ENCODE measurements at regions of chr10 and their contacts with region 1.

Region 1: GRCh38 chr10:79374312-79375191 is 27.3 kb downstream of the PPIF start:
- DNase-seq: peak; percentile 88
- ATAC-seq: peak; percentile 70

Region 2: DNA sequence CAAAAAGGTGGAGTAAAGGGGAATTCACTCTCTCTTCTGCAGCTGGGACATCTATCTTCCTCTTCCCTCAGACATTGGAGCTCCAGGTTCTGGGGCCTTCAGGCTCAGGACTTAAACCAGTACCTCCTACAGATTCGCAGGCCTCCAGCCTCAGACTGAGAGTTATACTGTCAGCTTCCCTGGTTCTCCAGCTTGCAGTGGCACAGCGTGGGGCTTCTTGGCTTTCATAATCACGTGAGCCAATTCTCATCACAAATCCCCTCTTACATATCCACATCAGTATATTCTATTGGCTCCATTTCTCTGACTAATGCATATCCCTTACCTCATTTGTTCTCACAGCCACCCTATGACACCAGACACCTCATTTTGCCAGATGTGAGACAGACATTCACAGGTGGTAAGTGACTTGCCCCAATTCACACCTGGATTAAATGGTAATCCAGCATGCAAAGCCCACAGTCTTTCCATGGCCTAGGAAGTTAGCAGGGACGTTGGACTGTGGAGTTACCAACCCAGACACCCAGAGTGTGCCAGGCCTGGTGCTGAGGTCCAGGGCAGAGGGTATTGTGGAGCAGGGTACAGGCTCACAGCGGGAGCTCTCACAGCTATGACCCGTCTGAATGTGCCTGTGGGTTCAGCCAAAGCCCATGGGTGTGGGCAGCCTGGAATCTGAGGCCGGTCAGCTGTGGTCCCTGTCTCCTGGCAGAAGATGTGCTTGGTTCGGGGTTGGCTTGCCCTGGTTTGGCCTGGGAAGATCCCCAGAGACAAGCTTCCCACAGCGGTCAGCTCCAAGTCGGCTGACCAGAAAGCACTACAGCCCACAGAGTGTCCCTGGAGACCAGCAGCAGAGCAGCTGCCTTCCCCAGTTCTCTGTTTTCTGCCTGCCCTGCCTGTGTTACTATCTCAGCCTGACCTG is 89.3 kb after region 1 on chr10:
- intact Hi-C with region 1: loop called (anchors 2 kb)
- DNase-seq: peak; percentile 55
- ATAC-seq: peak; percentile 27

Region 3: GRCh38 chr10:79487296-79488194 is 113.0 kb after region 1 on chr10:
- intact Hi-C with region 1: loop called (anchors 5 kb)
- DNase-seq: peak; percentile 69
- ATAC-seq: peak; percentile 54

Region 4: DNA sequence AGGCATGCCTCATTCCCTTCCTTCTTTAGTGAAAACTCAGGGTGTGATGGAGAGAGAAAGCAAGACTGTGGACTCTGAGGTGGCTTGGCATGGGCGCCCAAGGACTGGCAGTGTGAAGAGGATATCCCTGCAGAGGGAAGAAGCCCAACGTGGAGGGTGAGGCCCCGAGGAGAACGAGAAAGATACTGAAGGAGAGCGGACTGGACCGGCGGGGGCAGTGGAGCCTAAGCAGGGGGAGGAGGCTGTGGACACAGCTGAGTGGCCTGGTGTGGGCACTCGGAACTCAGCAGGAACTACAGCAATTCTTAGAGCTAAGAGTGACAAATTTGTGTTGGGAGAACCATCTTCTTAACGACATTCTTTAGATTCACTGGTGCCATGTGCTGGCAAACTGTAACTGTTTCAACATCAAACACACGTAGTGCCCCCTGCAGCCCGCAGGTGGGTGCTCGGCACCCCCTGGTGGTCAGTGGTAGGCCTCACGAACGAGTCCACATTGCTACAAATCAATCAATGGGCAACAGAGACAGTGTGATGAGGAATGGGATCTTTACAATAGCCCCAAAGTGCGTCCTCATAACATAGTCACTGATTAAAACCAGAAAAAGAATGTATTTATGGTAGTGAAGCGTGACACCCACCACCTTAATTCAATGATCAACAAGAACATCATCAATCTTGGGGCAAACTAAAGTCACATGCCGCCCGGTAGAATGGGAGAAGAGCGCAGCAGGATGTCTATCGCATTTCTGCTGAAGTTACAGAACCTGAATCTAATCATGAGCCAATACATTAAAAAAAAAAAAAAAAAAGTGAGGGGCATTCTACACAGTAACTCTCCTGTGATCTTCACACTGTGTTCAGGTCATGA is 234.2 kb after region 1 on chr10:
- intact Hi-C with region 1: loop called (anchors 10 kb)
- DNase-seq: no peak
- ATAC-seq: no peak